ENCODE measurements at regions of chr17 and their contacts with region 1.

Region 1: GRCh38 chr17:78421484-78422266 is 43.2 kb downstream of the PGS1 start:
- DNase-seq: peak; percentile 69
- H3K4me3 ChIP-seq: no peak overlapping the region
- H3K27ac ChIP-seq: no peak overlapping the region
- H3K4me1 ChIP-seq: no peaks in the 10 kb centered on the region
- H3K27me3 ChIP-seq: no peaks in the 10 kb centered on the region
- CTCF ChIP-seq: peak; percentile 88 to 98 (median 98)
- POLR2A ChIP-seq: no peak

Region 2: DNA sequence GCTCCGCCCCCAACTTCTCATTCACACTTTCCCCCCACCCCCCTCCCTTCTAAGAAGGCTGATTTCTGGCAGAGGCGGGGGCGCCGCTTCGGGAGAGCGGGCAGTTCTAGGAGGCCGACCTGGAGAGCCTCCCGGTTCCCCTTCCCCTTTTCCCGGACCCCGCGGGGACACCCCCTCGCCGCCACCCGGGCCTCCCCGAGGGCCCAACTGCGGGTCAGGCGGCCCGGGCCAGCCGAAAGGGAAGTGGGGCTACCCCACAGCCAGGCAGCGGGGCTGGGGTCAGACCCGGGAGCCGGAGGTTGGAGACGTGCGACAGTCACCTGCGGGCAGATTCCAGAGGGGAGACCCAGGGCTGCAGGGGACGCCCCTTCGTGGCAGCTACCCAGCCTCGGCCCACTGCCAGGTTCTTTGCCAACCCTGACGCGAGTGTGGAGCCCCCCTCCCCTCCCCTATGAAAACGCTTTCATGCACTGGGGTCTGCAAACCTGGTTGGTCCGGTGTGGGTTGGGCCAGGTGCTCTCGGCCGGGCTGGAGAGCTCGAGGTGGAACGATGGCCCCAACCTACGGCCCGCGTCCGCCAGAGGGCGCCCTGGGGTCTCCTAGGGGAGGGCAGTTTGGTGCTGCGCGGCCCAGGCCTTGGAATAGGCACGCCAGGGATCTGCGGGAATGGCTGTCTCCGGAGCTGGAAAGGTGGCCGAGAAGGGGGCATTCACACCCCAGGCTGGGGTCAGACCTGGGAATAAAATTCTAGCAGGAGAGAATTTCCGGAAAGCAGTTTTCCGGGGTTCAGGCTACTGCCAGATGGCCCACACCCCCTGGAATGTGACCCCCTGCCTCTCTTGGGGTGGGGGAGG is 61.1 kb before region 1 on chr17:
- intact Hi-C with region 1: loop called (anchors 5 kb)
- DNase-seq: peak; percentile 89
- H3K4me3 ChIP-seq: peak overlapping the region; percentile 43 to 59
- H3K27ac ChIP-seq: peak overlapping the region; percentile 69 to 82
- H3K4me1 ChIP-seq: peaks cover 7% of the 10 kb centered on the region
- H3K27me3 ChIP-seq: no peaks in the 10 kb centered on the region
- CTCF ChIP-seq: peak; percentile 77 to 98 (median 88)
- POLR2A ChIP-seq: peak; percentile 5

Region 3: DNA sequence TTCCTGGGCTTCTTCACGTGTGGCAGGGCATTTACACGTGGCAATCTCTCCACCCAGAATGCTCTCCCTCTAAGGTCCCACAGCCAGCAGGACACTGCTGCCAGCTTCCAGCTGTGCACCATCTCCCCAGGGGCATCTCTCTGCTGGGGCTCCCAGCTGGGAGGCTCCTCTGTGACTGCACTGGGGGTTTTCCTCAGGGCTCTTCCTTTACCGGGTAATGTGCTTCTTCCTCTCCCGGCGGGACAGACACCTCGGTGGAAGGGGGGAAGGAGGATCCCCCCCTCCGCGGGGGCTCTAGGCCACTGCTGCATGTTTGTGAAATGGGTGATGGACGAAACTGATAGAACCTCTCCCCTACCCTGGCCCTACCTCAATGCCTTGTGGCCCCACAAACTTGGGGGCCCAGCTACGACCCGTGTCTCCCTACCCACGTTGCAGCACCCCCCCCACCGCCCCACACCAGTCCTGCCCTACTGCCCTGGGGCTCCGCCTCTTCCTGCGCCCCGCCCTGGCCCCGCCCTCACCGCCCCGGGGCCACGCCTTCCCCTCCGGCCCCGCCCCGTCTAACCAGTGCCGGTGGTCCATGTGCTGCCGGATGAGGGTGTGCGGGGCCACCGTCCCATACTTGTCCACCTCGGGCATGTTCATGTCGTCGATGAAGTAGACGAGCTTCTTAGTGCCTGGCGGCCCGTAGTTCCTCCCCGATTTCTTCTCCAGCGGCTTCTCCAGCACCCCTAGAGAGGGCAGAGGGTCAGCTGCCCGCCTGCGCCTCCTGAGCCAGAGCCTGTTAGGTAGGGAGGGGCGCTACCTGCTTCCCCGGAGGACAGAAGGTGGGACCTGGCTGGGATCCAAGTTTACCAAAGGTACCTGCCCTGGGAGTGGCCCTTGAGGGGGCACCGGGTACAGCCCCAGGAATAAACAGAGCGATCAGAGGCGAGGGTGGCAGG is 62.9 kb after region 1 on chr17:
- intact Hi-C with region 1: no loop called
- DNase-seq: no peak
- H3K4me3 ChIP-seq: no peak overlapping the region
- H3K27ac ChIP-seq: no peak overlapping the region
- H3K4me1 ChIP-seq: no peaks in the 10 kb centered on the region
- H3K27me3 ChIP-seq: no peaks in the 10 kb centered on the region
- CTCF ChIP-seq: no peak
- POLR2A ChIP-seq: no peak

Measured in prostate gland (tissue), 2 donors.